Heart left ventricle (tissue), 16 donors: ENCODE measurements at regions of chr19 and their contacts with region 1.

Region 1: DNA sequence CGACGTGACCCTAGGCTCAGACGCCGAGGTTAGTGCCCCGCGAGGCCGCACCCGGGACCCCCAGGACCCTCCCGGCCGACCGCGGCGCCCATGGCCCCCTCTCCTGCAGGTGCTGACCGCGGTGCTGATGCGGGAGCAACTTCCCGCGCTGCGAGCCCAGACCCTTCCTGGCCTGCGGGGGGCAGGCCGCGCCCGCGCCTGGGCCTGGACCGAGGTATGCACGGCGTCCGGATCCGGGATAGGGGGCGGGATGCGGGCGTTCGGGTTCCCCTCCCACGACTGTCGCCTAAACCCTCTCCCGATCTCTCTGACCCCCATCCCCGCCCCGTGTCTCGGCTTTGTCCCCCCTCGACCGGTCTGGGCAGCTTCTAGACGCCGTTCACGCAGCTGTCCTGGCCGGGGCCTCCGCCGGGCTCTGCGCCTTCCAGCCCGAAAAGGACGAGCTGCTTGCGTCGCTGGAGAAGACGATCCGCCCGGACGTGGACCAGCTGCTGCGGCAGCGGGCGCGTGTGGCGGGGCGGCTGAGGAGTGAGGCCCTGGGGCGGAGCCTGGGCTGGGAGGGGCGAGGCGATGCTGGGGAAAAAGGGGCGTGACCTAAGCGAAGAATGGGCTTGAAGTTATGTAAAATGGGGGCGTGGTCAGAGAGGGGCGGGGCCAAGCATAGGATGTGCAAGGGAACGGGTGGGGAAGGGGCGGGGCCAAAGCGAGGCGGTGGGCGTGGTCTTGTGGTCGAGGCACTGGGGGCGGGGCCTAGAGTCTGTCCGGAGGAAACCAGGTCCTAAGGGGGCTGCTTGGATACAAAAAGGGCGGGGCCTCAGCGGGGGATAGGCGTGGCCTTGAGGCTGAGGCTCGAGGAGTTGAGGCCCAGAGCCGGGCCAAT is 16.0 kb upstream of the COLGALT1 start:
- DNase-seq: peak; percentile 92 to 97 (median 96)
- ATAC-seq: peak; percentile 82 to 96 (median 93)
- H3K4me3 ChIP-seq: peak overlapping the region; percentile 20 to 67 (median 56)
- H3K27ac ChIP-seq: peak overlapping the region in 11 of 12 donors; percentile 9 to 72 (median 59)
- H3K4me1 ChIP-seq: peaks cover 0 to 13% (median 11%) of the 10 kb centered on the region in 12 donors
- H3K27me3 ChIP-seq: peaks cover 0 to 13% (median 0%) of the 10 kb centered on the region in 9 donors
- CTCF ChIP-seq: peak in 11 of 12 donors; percentile 22 to 70 (median 59)
- POLR2A ChIP-seq: no peak

Region 2: GRCh38 chr19:17522988-17523872 is 16.2 kb before region 1 on chr19:
- intact Hi-C with region 1: no loop called
- DNase-seq: peak; percentile 56 to 79 (median 59)
- ATAC-seq: peak; percentile 20 to 86 (median 76)
- H3K4me3 ChIP-seq: peak overlapping the region in 1 of 12 donors; percentile 20
- H3K27ac ChIP-seq: peak overlapping the region in 3 of 12 donors; percentile 8 to 87 (median 24)
- H3K4me1 ChIP-seq: peaks cover 0 to 30% (median 3%) of the 10 kb centered on the region in 12 donors
- H3K27me3 ChIP-seq: peaks cover 0 to 26% (median 0%) of the 10 kb centered on the region in 9 donors
- CTCF ChIP-seq: no peak
- POLR2A ChIP-seq: no peak

Region 3: DNA sequence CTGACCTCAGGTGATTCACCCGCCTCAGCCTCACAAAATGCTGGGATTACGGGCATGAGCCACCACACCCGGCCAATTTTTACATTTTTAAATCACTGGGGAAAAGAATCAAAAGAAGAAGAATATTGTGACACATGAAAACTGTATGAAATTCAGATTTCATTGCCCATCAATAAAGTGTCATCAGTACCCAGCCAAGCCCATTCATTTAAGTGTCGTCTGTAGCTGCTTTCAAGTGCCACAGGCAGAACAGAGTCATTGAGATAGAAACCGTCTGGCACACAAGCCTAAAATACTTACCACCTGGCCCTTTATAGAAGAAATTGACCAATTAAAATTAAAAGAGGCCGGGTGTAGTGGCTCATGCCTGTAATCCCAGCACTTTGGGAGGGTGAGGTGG is 31.3 kb after region 1 on chr19:
- intact Hi-C with region 1: loop called in 5 of 10 experiments (anchors 1 to 2 kb)
- DNase-seq: no peak
- ATAC-seq: no peak
- H3K4me3 ChIP-seq: no peak overlapping the region
- H3K27ac ChIP-seq: no peak overlapping the region
- H3K4me1 ChIP-seq: peaks cover 0 to 5% (median 3%) of the 10 kb centered on the region in 12 donors
- H3K27me3 ChIP-seq: no peaks in the 10 kb centered on the region
- CTCF ChIP-seq: no peak
- POLR2A ChIP-seq: no peak

Region 4: DNA sequence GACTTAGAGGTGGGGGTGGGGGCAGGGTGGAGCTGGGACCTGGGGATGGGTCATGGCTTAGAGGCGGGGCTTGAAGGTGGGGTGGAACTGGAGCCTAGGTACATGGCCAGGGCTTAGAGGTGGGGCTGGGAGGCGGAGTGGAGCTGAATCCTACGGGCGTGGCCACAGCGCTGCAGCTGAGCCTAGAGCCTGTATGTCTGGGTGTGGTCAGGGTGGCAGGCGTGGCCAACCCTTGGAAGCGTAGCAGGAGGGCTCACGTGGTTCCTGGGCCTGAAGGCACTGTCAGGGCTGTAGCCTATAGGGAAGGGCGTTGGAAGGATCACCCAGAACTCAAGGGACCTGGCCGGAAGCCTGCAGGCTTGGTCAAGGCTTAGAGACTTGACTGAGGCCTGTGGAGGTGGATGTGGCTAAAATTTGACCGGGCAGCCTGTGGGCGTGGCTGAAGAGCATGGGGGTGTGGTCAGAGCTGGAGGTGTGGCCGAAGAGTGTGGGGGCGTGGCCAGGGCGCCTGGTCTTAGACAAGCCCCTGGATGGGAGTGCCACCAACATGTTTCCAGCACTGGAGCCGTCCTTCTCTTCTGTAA is 40.3 kb after region 1 on chr19:
- intact Hi-C with region 1: loop called in 4 of 10 experiments (anchors 1 to 2 kb)
- DNase-seq: peak in 4 of 5 donors; percentile 40 to 63 (median 46)
- ATAC-seq: peak; percentile 62 to 80 (median 76)
- H3K4me3 ChIP-seq: no peak overlapping the region
- H3K27ac ChIP-seq: no peak overlapping the region
- H3K4me1 ChIP-seq: no peaks in the 10 kb centered on the region
- H3K27me3 ChIP-seq: no peaks in the 10 kb centered on the region
- CTCF ChIP-seq: no peak
- POLR2A ChIP-seq: peak in 1 of 2 donors; percentile 16

Region 5: DNA sequence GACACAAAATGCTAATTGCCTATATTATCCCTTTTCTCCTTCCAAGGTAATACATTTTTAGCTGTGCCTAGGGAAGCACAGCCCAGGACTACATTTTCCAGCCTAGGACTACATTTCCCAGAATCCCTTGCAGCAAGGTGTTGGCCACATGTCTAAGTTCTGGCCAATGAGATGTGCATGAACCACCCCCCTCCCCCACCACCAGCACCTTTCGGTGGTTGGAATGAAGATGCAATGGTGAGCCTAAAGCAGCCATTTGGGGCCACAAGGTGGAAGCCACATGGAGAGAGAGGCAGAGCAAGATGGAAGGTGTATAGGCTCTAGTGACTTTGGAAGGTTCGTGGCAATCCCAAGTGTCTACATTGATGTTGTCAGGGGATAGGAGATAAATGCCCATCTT is 132.4 kb after region 1 on chr19:
- intact Hi-C with region 1: no loop called
- DNase-seq: no peak
- ATAC-seq: no peak
- H3K4me3 ChIP-seq: no peak overlapping the region
- H3K27ac ChIP-seq: no peak overlapping the region
- H3K4me1 ChIP-seq: no peaks in the 10 kb centered on the region
- H3K27me3 ChIP-seq: no peaks in the 10 kb centered on the region
- CTCF ChIP-seq: no peak
- POLR2A ChIP-seq: no peak

Region 6: DNA sequence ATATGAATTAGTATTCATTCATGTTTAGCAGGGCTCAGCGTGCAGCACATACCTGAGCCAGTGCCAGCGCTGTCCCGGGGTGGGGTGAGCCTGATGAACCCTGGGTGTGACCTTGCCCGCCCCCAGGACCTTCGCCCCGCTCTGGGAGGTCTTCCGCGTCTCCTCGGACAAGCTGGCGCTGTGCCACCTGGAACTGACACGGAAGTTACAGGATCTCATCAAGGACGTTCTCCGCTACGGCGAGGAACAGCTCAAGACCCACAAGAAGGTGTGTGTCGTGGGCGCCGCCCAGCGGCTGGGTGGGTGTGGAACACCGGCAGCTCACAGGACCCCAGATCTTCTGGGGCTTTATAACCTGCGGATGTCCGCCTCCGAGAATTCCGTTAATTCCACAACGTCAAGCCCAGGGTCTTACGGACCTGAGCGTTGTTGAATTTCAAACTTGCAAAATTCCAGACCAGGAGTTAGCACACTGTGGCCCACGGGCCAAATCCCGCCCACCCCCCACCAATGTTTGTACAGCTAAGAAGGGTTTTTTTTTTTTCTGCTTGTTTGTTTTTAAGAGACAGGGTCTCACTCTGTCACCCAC is 227.2 kb after region 1 on chr19:
- intact Hi-C with region 1: loop called in 2 of 10 experiments (anchors 5 to 10 kb)
- DNase-seq: peak; percentile 71 to 91 (median 80)
- ATAC-seq: peak; percentile 32 to 92 (median 85)
- H3K4me3 ChIP-seq: peak overlapping the region in 5 of 12 donors; percentile 7 to 30 (median 25)
- H3K27ac ChIP-seq: no peak overlapping the region
- H3K4me1 ChIP-seq: peaks cover 0 to 13% (median 6%) of the 10 kb centered on the region in 12 donors
- H3K27me3 ChIP-seq: no peaks in the 10 kb centered on the region
- CTCF ChIP-seq: peak; percentile 77 to 90 (median 79)
- POLR2A ChIP-seq: no peak